ENCODE measurements at regions of chr1 and their contacts with region 1.

Region 1: GRCh38 chr1:89843281-89844121 is 22.7 kb downstream of the LRRC8D start:
- DNase-seq: peak; percentile 84
- H3K27ac ChIP-seq: peak overlapping the region; percentile 85
- CTCF ChIP-seq: peak; percentile 75

Region 2: GRCh38 chr1:89794406-89794805 is 49.1 kb before region 1 on chr1:
- CTCF ChIA-PET with region 1: no interaction called
- POLR2A ChIA-PET with region 1: no interaction called
- DNase-seq: no peak
- H3K27ac ChIP-seq: no peak overlapping the region
- CTCF ChIP-seq: no peak

Region 3: DNA sequence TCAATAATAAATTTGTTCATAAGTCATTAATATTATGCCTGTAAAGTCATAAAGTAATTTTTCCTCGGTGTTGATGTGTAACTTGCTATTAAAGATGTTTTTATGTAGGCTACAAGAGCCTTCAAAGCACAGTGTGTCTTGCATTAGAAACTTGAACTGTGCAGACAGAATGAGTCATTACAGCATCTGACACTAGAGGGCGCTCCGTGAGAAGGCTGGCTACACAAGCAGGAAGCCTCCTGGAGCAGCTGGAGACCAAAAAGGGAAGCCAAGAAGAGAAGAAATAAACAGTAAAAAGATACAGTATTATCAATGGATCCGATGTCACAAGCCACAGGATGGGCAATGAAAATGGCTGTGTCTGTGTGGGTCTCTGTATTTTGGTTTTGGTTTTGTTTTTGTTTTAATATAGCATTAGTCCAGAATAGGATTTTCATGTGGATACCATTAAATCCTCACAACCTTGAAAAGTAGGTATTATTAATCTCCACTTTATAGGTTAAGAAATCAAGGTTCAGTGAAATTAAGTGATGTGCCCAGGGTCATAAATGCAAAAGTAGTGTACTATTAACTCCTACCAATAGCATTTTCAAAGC is 38.8 kb before region 1 on chr1:
- CTCF ChIA-PET with region 1: interaction called, 22 read pairs
- POLR2A ChIA-PET with region 1: no interaction called
- DNase-seq: peak; percentile 72
- H3K27ac ChIP-seq: no peak overlapping the region
- CTCF ChIP-seq: peak; percentile 94

Region 4: DNA sequence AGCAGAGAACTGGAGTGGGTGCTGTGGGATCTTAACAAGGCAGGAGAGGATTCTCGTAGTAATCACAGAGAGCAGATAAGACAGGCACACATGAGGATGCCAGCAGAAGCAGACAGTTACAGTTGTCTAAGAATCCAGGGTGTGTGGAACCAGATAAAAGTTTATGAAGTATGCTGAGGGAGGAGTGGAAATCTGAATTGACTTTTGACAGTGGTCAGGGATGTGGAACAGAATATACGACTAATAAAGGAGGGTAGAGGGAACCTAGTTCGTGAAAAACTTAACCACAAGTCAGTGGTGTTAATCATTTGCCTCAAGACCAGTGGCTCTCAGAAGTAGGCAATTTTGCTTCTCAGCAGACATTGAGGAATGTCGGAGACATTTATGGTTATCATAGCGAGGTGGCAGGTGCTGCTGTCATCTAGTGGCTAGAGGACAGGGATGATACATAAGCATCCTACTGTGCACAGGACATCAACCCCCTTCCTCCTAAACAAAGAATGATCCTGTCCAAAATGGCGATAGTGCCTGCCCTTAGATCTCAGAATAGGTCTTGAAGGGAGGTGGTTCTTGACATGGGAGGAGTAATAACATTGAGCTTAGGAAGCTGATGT is 19.7 kb before region 1 on chr1:
- CTCF ChIA-PET with region 1: interaction called, 13 read pairs
- POLR2A ChIA-PET with region 1: no interaction called
- DNase-seq: no peak
- H3K27ac ChIP-seq: no peak overlapping the region
- CTCF ChIP-seq: no peak

Measured in RWPE1 (cell line).